Panc1 (cell line): ENCODE measurements at regions of chr6 and their contacts with region 1.

Region 1: DNA sequence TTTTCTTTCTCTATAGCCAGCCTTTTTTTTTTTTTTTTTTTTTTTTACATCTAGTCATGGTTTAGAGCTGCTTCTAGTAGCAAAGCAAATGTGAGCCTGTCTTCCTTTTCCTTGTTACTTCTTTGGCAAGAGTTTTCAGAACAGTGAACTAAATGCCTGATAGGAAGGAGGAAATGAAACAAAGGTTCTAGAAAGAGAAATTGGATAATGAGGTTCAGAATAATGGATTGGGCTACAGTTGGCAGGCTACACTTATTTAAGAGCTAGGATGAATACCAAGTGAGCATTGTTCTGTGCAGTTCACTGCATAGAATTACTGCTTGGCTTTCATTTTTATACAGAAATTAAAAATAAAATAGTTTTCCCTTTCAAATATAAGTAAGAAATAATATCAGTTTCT is 78.6 kb downstream of the HIVEP1 start:
- DNase-seq: no peak
- ATAC-seq: no peak
- H3K4me3 ChIP-seq: no peak overlapping the region
- H3K27ac ChIP-seq: no peak overlapping the region
- H3K4me1 ChIP-seq: no peaks in the 10 kb centered on the region
- H3K27me3 ChIP-seq: no peaks in the 10 kb centered on the region
- CTCF ChIP-seq: no peak

Region 2: GRCh38 chr6:12064131-12064530 is 26.6 kb before region 1 on chr6:
- CTCF ChIA-PET with region 1: no interaction called
- POLR2A ChIA-PET with region 1: no interaction called
- in situ Hi-C with region 1: no loop called
- intact Hi-C with region 1: no loop called
- DNase-seq: no peak
- ATAC-seq: no peak
- H3K4me3 ChIP-seq: no peak overlapping the region
- H3K27ac ChIP-seq: no peak overlapping the region
- H3K4me1 ChIP-seq: peaks cover 4% of the 10 kb centered on the region
- H3K27me3 ChIP-seq: no peaks in the 10 kb centered on the region
- CTCF ChIP-seq: no peak

Region 3: DNA sequence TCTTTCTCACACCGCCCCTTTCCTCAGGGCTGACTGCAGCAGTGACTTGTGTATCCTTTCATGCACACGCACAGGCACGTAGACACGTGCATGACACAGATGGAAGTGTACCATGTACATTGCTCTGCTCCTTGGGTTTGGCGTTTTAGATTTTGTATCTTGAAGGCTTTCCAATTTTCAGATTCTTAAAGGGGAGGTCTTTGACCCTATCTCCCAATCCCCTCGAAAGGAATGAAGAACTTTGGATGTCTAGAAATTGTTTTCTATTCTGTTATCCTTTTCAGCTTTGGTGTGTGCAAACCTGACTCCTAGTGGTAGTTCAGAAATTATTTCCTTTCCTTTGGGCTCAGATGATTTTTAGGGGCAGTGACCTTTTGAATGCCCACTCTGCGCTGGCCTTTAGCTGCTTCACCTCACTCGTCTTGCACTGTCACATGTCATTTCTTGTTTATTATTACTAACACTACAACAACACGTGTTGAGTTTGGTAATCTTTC is 15.6 kb before region 1 on chr6:
- CTCF ChIA-PET with region 1: no interaction called
- POLR2A ChIA-PET with region 1: no interaction called
- in situ Hi-C with region 1: no loop called
- intact Hi-C with region 1: no loop called
- DNase-seq: no peak
- ATAC-seq: peak; percentile 53; the same call in 1 of the 2 replicates
- H3K4me3 ChIP-seq: no peak overlapping the region
- H3K27ac ChIP-seq: no peak overlapping the region
- H3K4me1 ChIP-seq: peaks cover 2% of the 10 kb centered on the region; the same call in 1 of the 2 replicates
- H3K27me3 ChIP-seq: no peaks in the 10 kb centered on the region
- CTCF ChIP-seq: peak; percentile 67

Region 4: GRCh38 chr6:12113190-12113577 is 22.5 kb after region 1 on chr6:
- CTCF ChIA-PET with region 1: no interaction called
- POLR2A ChIA-PET with region 1: no interaction called
- in situ Hi-C with region 1: no loop called
- intact Hi-C with region 1: no loop called
- DNase-seq: no peak
- ATAC-seq: no peak
- H3K4me3 ChIP-seq: no peak overlapping the region
- H3K27ac ChIP-seq: no peak overlapping the region
- H3K4me1 ChIP-seq: no peaks in the 10 kb centered on the region
- H3K27me3 ChIP-seq: no peaks in the 10 kb centered on the region
- CTCF ChIP-seq: no peak

Region 5: GRCh38 chr6:12138936-12139335 is 48.2 kb after region 1 on chr6:
- CTCF ChIA-PET with region 1: interaction called, 14 read pairs
- POLR2A ChIA-PET with region 1: no interaction called
- in situ Hi-C with region 1: no loop called
- intact Hi-C with region 1: no loop called
- DNase-seq: no peak
- ATAC-seq: no peak
- H3K4me3 ChIP-seq: no peak overlapping the region
- H3K27ac ChIP-seq: no peak overlapping the region
- H3K4me1 ChIP-seq: 0 out of 2 replicates have a peak, but pooled peaks cover 4% of the 10 kb centered on the region
- H3K27me3 ChIP-seq: no peaks in the 10 kb centered on the region
- CTCF ChIP-seq: no peak